CD8-positive, alpha-beta T cell (primary cell): ENCODE measurements at regions of chr10 and their contacts with region 1.

Region 1: DNA sequence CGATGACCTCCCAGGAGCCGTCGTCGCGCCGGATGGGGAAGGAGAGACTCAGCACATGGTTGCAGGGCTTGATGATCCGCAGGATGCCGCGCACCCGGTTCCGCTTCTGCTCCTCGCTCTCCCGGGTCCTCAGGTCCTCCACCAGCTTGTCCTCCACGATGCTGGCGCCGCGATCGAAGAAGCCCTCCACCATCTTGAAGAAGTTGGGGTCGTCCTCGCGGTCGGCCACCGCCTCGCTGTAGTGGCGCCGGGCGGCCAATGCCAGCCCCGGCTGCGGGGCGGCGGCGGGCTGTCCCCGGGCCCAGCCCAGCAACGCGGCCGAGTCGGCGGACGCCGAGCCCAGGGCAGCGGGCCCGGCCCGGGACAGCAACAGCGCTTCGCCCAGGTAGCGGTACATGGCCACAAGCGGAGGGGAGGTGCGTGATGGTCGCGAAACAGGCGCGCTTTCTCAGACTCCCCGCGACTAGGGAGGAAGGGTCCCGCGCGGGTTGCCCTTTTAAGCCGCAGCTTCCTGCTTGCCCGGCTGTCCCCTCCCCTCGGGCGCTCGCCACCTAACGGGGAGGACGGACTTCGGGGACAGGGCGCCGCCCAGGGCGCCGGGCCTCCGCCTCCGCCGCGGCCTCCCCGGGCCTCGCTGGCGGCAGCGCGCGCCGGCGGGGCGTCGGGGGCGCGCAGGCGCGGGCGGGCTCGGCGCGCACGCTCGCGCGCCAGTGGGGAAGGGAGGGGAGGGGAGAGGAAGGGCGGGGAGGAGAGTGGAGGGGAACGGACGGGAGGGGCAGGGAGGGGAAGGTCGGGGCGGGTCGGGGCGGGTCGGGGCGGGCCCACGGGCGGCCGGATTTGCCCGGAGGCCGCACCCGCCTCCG is at the starts of genes GLUD1 and SHLD2:
- DNase-seq: peak; percentile 73 to 94 (median 86)
- ATAC-seq: peak; percentile 65
- H3K4me3 ChIP-seq: peak within 1 kb of the TSS; percentile 70 to 71
- H3K4me3 Mint-ChIP-seq: peak within 1 kb of the TSS; percentile 95
- H3K27ac ChIP-seq: peak within 1 kb of the TSS; percentile 84 to 85
- H3K27ac Mint-ChIP-seq: peak within 1 kb of the TSS; percentile 96
- H3K4me1 ChIP-seq: peaks cover 40% of the 10 kb centered on the region
- H3K4me1 Mint-ChIP-seq: peaks cover 64% of the 10 kb centered on the region
- H3K27me3 ChIP-seq: no peaks in the 10 kb centered on the region
- H3K27me3 Mint-ChIP-seq: no peaks in the 10 kb centered on the region
- CTCF ChIP-seq: no peak
- total RNA-seq, gene GLUD1: 69.5 to 70.5 TPM
- total RNA-seq, gene SHLD2: 16.3 to 16.6 TPM

Region 2: GRCh38 chr10:85810674-85811073 is 1283.9 kb before region 1 on chr10:
- CTCF ChIA-PET with region 1: no interaction called
- POLR2A ChIA-PET with region 1: no interaction called
- intact Hi-C with region 1: no loop called
- DNase-seq: no peak
- ATAC-seq: no peak
- H3K4me3 ChIP-seq: no peak overlapping the region
- H3K4me3 Mint-ChIP-seq: no peak overlapping the region
- H3K27ac ChIP-seq: no peak overlapping the region
- H3K27ac Mint-ChIP-seq: no peak overlapping the region
- H3K4me1 ChIP-seq: no peaks in the 10 kb centered on the region
- H3K4me1 Mint-ChIP-seq: no peaks in the 10 kb centered on the region
- H3K27me3 ChIP-seq: no peaks in the 10 kb centered on the region
- H3K27me3 Mint-ChIP-seq: no peaks in the 10 kb centered on the region
- CTCF ChIP-seq: no peak

Region 3: DNA sequence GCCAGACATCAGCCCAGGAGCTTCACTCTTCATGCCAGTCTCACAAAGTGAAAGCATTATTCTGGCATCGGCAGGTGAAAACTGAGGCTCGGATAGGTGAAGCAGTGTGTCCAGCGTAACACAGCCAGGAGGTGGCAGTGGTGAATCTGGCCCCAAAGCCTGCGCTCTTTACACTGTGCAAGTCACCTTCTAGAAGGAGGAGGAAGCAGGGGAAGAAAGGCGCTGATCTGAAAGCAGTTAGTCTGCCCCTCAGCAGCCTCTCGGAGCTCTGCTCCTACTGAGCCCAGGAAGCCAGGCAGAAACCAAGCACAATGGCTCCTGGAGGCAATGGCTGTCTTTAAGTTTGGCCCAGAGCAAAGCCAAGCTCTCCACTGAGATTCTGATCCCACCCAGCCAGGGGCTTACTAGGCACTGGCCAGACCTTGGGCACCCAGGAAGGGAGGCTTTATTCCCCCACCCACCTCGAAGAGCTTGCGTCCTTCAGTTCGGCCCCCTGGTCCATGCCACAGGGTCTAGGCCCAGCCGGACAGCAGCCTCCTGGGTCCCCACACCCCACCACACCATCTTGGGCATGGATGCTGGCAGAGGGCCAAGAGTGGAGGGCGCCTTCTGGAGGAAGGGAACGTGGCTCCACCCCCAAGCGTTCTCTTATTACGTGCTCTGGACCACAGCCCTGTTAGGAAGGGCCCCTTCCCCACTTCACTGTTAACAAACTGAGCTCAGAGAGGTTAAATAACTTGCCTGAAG is 832.5 kb before region 1 on chr10:
- CTCF ChIA-PET with region 1: no interaction called
- POLR2A ChIA-PET with region 1: no interaction called
- intact Hi-C with region 1: no loop called
- DNase-seq: peak in 2 of 9 experiments; percentile 12 to 42
- ATAC-seq: no peak
- H3K4me3 ChIP-seq: no peak overlapping the region
- H3K4me3 Mint-ChIP-seq: no peak overlapping the region
- H3K27ac ChIP-seq: no peak overlapping the region
- H3K27ac Mint-ChIP-seq: no peak overlapping the region
- H3K4me1 ChIP-seq: no peaks in the 10 kb centered on the region
- H3K4me1 Mint-ChIP-seq: peaks cover 7% of the 10 kb centered on the region
- H3K27me3 ChIP-seq: no peaks in the 10 kb centered on the region
- H3K27me3 Mint-ChIP-seq: peaks cover 31% of the 10 kb centered on the region
- CTCF ChIP-seq: no peak

Region 4: DNA sequence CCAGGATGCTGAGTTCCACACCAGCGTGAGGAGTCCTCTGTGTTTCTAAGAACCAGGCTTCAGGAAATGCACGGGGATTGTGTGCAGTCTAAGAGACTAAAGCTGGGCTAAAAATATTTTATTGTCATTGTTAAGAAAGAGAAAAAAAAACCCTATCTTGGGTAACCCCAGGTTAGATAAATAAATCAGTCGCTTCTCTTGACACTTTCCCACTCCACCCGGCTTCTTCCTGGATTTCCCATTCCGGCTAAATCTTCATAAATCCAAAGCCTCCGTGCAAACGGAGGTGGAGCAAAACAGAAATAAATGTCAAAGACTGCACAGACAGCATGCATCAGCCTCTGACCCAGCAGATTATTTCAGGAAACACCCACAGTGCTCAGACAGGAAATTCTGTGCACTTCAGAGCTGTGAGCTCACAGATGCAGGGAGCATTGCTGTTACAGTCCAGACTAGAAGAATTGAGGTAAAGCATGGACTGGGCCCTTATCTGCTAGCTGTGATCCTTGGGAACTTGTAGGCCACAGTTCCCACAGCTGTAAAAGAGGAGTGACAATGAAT is 683.2 kb before region 1 on chr10:
- CTCF ChIA-PET with region 1: no interaction called
- POLR2A ChIA-PET with region 1: no interaction called
- intact Hi-C with region 1: loop called in 1 of 2 experiments (anchors 10 kb)
- DNase-seq: peak in 6 of 9 experiments; percentile 14 to 64 (median 31)
- ATAC-seq: peak; percentile 54
- H3K4me3 ChIP-seq: no peak overlapping the region
- H3K4me3 Mint-ChIP-seq: peak overlapping the region; percentile 74
- H3K27ac ChIP-seq: peak overlapping the region; percentile 6 to 64
- H3K27ac Mint-ChIP-seq: peak overlapping the region; percentile 83
- H3K4me1 ChIP-seq: peaks cover 51% of the 10 kb centered on the region
- H3K4me1 Mint-ChIP-seq: peaks cover 51% of the 10 kb centered on the region
- H3K27me3 ChIP-seq: no peaks in the 10 kb centered on the region
- H3K27me3 Mint-ChIP-seq: no peaks in the 10 kb centered on the region
- CTCF ChIP-seq: no peak

Region 5: GRCh38 chr10:86755740-86756510 is 338.7 kb before region 1 on chr10:
- CTCF ChIA-PET with region 1: no interaction called
- POLR2A ChIA-PET with region 1: no interaction called
- intact Hi-C with region 1: loop called (anchors 1 to 2 kb)
- DNase-seq: peak; percentile 66 to 92 (median 85)
- ATAC-seq: peak; percentile 92
- H3K4me3 ChIP-seq: peak overlapping the region; percentile 72 to 77
- H3K4me3 Mint-ChIP-seq: peak overlapping the region; percentile 86
- H3K27ac ChIP-seq: peak overlapping the region in 1 of 2 experiments; percentile 45
- H3K27ac Mint-ChIP-seq: no peak overlapping the region
- H3K4me1 ChIP-seq: peaks cover 15% of the 10 kb centered on the region
- H3K4me1 Mint-ChIP-seq: peaks cover 31% of the 10 kb centered on the region
- H3K27me3 ChIP-seq: peaks cover 0 to 4% of the 10 kb centered on the region in 2 experiments
- H3K27me3 Mint-ChIP-seq: peaks cover 17% of the 10 kb centered on the region
- CTCF ChIP-seq: no peak

Region 6: DNA sequence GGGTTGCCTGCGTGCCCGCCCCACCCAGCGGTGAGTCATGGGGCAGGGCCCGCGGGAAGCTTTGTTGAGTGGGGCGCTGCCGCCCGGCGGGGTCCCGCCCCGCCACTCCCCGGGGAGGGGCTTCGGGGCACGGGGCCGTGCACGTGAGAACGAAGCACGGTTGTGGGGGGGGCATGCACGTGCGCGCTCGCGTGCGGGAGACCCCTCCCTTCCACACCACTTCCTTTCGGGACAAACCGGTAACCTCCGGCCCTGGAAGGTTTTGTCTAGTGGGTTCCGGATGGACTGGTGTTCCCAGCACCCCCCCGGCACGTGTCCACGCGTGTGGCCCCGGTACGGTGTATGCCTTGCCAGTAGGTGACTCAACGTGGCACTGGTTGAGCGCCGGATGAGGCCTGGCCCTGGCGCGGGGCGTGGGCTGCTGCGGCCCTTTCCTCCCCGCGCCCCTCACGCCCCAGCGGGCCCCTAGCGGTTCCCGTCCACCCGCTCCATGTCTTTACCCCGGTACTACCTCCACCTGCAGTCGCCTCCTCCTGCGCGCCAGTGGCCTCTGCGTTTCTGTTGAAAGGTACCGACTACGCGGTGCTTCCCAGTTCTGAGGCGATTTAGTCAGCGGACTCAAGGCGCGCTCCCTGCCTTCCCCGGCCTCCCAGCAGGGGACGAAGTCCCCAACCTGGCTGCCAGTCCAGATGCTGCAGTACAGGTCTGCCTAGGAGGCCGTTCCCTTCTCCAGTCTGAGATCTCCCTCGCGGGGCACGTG is 123.2 kb before region 1 on chr10:
- CTCF ChIA-PET with region 1: no interaction called
- POLR2A ChIA-PET with region 1: interaction called, 3 read pairs
- intact Hi-C with region 1: loop called (anchors 1 to 2 kb)
- DNase-seq: peak; percentile 87 to 95 (median 91)
- ATAC-seq: peak; percentile 86
- H3K4me3 ChIP-seq: peak overlapping the region; percentile 61 to 66
- H3K4me3 Mint-ChIP-seq: peak overlapping the region; percentile 78
- H3K27ac ChIP-seq: peak overlapping the region; percentile 80 to 89
- H3K27ac Mint-ChIP-seq: peak overlapping the region; percentile 91
- H3K4me1 ChIP-seq: peaks cover 50% of the 10 kb centered on the region
- H3K4me1 Mint-ChIP-seq: peaks cover 31% of the 10 kb centered on the region
- H3K27me3 ChIP-seq: no peaks in the 10 kb centered on the region
- H3K27me3 Mint-ChIP-seq: no peaks in the 10 kb centered on the region
- CTCF ChIP-seq: no peak

Region 7: DNA sequence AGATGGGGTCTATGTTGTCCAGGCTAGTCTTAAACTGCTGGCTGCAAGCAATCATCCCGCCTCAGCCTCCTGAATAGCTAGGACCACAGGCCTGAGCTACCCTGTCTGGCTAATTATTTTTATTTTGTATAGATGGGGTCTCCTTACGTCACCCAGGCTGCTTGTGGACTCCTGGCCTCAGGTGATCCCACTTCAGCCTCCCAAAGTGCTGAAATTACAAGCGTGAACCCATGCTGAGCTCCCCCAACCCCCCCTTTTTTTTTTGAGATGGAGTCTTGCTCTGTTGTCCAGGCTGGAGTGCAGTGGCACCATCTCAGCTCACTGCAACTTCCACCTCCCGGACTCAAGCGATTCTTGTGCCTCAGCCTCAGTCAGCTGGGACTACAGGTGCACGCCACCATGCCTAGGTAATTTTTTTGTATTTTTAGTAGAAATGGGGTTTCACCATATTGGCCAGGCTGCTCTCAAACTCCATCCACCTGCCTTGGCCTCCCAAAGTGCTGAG is 49.1 kb before region 1 on chr10:
- CTCF ChIA-PET with region 1: no interaction called
- POLR2A ChIA-PET with region 1: no interaction called
- intact Hi-C with region 1: no loop called
- DNase-seq: no peak
- ATAC-seq: no peak
- H3K4me3 ChIP-seq: no peak overlapping the region
- H3K4me3 Mint-ChIP-seq: no peak overlapping the region
- H3K27ac ChIP-seq: no peak overlapping the region
- H3K27ac Mint-ChIP-seq: no peak overlapping the region
- H3K4me1 ChIP-seq: no peaks in the 10 kb centered on the region
- H3K4me1 Mint-ChIP-seq: no peaks in the 10 kb centered on the region
- H3K27me3 ChIP-seq: no peaks in the 10 kb centered on the region
- H3K27me3 Mint-ChIP-seq: no peaks in the 10 kb centered on the region
- CTCF ChIP-seq: no peak

Region 8: GRCh38 chr10:87072449-87072848 is 22.2 kb before region 1 on chr10:
- CTCF ChIA-PET with region 1: no interaction called
- POLR2A ChIA-PET with region 1: no interaction called
- intact Hi-C with region 1: no loop called
- DNase-seq: no peak
- ATAC-seq: no peak
- H3K4me3 ChIP-seq: no peak overlapping the region
- H3K4me3 Mint-ChIP-seq: no peak overlapping the region
- H3K27ac ChIP-seq: no peak overlapping the region
- H3K27ac Mint-ChIP-seq: no peak overlapping the region
- H3K4me1 ChIP-seq: no peaks in the 10 kb centered on the region
- H3K4me1 Mint-ChIP-seq: peaks cover 6% of the 10 kb centered on the region
- H3K27me3 ChIP-seq: no peaks in the 10 kb centered on the region
- H3K27me3 Mint-ChIP-seq: no peaks in the 10 kb centered on the region
- CTCF ChIP-seq: no peak

Region 9: GRCh38 chr10:87817609-87818504 is 723.3 kb after region 1 on chr10 and contains the start of gene ATAD1:
- CTCF ChIA-PET with region 1: no interaction called
- POLR2A ChIA-PET with region 1: no interaction called
- intact Hi-C with region 1: loop called in 1 of 2 experiments (anchors 10 kb)
- DNase-seq: peak; percentile 79 to 96 (median 88)
- ATAC-seq: peak; percentile 84
- H3K4me3 ChIP-seq: peak within 1 kb of the TSS; percentile 83 to 87
- H3K4me3 Mint-ChIP-seq: peak within 1 kb of the TSS; percentile 94
- H3K27ac ChIP-seq: peak within 1 kb of the TSS; percentile 89 to 95
- H3K27ac Mint-ChIP-seq: peak within 1 kb of the TSS; percentile 100
- H3K4me1 ChIP-seq: peaks cover 26% of the 10 kb centered on the region
- H3K4me1 Mint-ChIP-seq: peaks cover 45% of the 10 kb centered on the region
- H3K27me3 ChIP-seq: no peaks in the 10 kb centered on the region
- H3K27me3 Mint-ChIP-seq: no peaks in the 10 kb centered on the region
- CTCF ChIP-seq: peak; percentile 20
- total RNA-seq, gene ATAD1: 36.9 to 39.0 TPM